ENCODE measurements at regions of chr22 and their contacts with region 1.

Region 1: DNA sequence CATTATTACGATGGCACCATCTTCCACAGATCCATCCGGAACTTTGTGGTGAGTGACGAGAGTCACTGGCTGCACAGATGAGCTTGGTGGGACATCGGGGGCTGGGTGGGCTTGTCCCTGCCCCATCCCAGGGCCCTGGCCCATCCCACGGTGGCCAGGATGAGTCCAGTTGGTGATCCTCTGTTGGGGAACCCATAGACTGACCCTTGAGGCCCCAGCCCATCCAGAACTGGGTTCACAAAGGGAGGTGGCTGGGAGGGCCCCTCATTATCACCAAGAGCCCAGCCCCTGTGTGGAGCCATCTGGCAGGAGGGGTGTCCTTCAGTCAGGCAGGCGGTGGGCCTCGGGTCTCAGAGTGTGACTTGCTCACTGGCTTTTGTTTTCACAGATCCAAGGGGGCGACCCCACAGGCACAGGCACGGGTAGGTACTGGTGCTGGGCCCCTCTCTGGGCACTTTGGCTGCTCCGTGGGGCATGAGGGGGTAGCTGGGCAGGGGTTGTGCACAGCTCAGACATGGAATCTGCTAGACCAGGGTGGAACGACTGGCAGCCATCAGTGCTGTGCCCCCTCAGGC is 22.0 kb downstream of the PPIL2 start:
- DNase-seq: no peak
- H3K4me3 ChIP-seq: no peak overlapping the region
- H3K27ac ChIP-seq: no peak overlapping the region
- H3K4me1 ChIP-seq: no peaks in the 10 kb centered on the region
- H3K27me3 ChIP-seq: no peaks in the 10 kb centered on the region
- CTCF ChIP-seq: no peak
- EP300 ChIP-seq: no peak
- POLR2A ChIP-seq: no peak
- RAD21 ChIP-seq: no peak

Region 2: GRCh38 chr22:21641789-21642583 is 45.8 kb before region 1 on chr22 and contains the start of gene SDF2L1:
- CTCF ChIA-PET with region 1: no interaction called
- POLR2A ChIA-PET with region 1: no interaction called
- DNase-seq: peak; percentile 92 to 96
- H3K4me3 ChIP-seq: peak within 1 kb of the TSS; percentile 65 to 77 (median 72)
- H3K27ac ChIP-seq: no peak within 1 kb of the TSS
- H3K4me1 ChIP-seq: peaks cover 0 to 5% (median 2%) of the 10 kb centered on the region in 4 experiments; a peak in 4 of 7 replicates
- H3K27me3 ChIP-seq: peaks cover 0 to 7% (median 1%) of the 10 kb centered on the region in 4 experiments; a peak in 3 of 7 replicates
- CTCF ChIP-seq: 0 out of 4 replicates have a peak, but pooled peaks of 1 of the 3 experiments have one; percentile 2
- EP300 ChIP-seq: peak in 1 of 2 experiments; percentile 18; a peak in 1 of 3 replicates
- POLR2A ChIP-seq: peak in 1 of 2 experiments; percentile 64; a peak in 2 of 3 replicates
- RAD21 ChIP-seq: no peak
- total RNA-seq, gene SDF2L1: 51.1 and 54.5 TPM in 2 replicates

Region 3: DNA sequence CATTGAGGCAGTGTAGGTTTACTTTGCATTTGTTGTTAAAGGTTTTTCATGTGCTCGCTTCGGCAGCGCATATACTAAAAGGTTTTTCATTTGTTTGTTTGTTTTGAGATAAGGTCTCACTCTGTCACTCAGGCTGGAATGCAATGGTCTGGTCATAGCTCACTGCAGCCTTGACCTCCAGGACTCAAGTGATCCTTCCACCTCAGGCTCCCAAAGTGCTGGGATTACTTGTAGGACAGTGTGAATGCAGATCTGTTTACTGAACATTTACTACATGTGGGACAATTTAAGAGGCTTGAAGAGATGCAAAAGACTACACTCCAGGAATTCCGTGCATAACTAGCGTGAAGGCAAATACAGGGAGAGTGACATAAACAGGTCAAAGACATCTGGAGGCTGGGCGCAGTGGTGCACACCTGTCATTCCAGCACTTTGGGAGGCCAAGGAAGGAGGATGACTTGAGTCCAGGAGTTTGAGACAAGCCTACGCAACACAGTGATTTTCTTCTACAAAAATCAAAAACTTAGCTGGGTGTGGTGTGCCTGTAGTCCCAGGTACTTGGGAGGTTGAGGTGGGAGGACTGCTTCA is 13.7 kb after region 1 on chr22:
- CTCF ChIA-PET with region 1: interaction called, 4 read pairs
- POLR2A ChIA-PET with region 1: interaction called, 11 read pairs
- DNase-seq: no peak
- H3K4me3 ChIP-seq: no peak overlapping the region
- H3K27ac ChIP-seq: no peak overlapping the region
- H3K4me1 ChIP-seq: no peaks in the 10 kb centered on the region
- H3K27me3 ChIP-seq: no peaks in the 10 kb centered on the region
- CTCF ChIP-seq: no peak
- EP300 ChIP-seq: no peak
- POLR2A ChIP-seq: no peak
- RAD21 ChIP-seq: no peak

Region 4: GRCh38 chr22:21754523-21754922 is 66.8 kb after region 1 on chr22:
- CTCF ChIA-PET with region 1: no interaction called
- POLR2A ChIA-PET with region 1: no interaction called
- DNase-seq: no peak
- H3K4me3 ChIP-seq: no peak overlapping the region
- H3K27ac ChIP-seq: no peak overlapping the region
- H3K4me1 ChIP-seq: no peaks in the 10 kb centered on the region; a peak in 1 of 7 replicates
- H3K27me3 ChIP-seq: no peaks in the 10 kb centered on the region
- CTCF ChIP-seq: no peak
- EP300 ChIP-seq: no peak
- POLR2A ChIP-seq: no peak
- RAD21 ChIP-seq: no peak